ENCODE measurements at regions of chrX and their contacts with region 1.

Region 1: GRCh38 chrX:68828740-68829552 is at the start of gene EFNB1:
- DNase-seq: peak; percentile 88
- H3K4me3 Mint-ChIP-seq: peak within 1 kb of the TSS; percentile 86
- H3K27ac Mint-ChIP-seq: peak within 1 kb of the TSS; percentile 58
- H3K4me1 Mint-ChIP-seq: peaks cover 21% of the 10 kb centered on the region
- H3K27me3 Mint-ChIP-seq: no peaks in the 10 kb centered on the region
- total RNA-seq, gene EFNB1: 5.8 to 6.2 TPM

Region 2: DNA sequence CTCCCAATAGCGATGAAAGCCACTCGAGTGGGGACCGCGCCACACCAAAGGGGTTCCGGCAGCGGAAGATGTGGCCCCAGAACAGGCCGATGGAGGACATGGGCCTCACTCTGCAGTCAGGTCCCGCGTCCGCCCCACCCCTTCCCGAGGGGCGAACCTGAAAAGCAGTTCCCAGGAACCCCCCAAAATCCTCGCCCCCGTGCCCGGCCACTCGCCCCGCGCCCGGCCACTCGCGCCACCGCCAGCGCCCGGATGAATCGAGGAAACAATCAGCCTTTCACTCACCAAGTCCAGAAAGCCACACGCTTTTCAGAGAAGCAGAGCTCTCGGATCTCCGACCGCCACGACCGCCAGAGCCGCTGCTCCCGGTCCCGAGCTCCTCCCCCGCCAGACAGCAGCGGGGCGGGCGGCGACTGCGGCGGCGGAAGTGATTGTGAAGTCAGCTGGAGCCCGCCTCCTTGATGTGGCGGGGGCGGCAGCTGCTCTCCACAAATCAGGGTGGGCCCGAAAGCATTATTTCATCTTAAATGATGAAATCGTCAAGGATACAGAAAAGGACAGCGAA is 336.2 kb after region 1 on chrX and contains the start of gene PJA1:
- CTCF ChIA-PET with region 1: interaction called, 16 read pairs
- POLR2A ChIA-PET with region 1: interaction called, 5 read pairs
- DNase-seq: peak; percentile 71
- H3K4me3 Mint-ChIP-seq: peak within 1 kb of the TSS; percentile 78
- H3K27ac Mint-ChIP-seq: peak within 1 kb of the TSS; percentile 65
- H3K4me1 Mint-ChIP-seq: peaks cover 30% of the 10 kb centered on the region
- H3K27me3 Mint-ChIP-seq: peaks cover 4% of the 10 kb centered on the region
- total RNA-seq, gene PJA1: 15.4 to 19.5 TPM

Region 3: GRCh38 chrX:69222103-69223090 is 393.5 kb after region 1 on chrX:
- CTCF ChIA-PET with region 1: interaction called, 47 read pairs
- POLR2A ChIA-PET with region 1: no interaction called
- DNase-seq: peak; percentile 66
- H3K4me3 Mint-ChIP-seq: no peak overlapping the region
- H3K27ac Mint-ChIP-seq: no peak overlapping the region
- H3K4me1 Mint-ChIP-seq: no peaks in the 10 kb centered on the region
- H3K27me3 Mint-ChIP-seq: no peaks in the 10 kb centered on the region

Measured in activated CD4-positive, alpha-beta memory T cell treated with anti-CD3 and anti-CD28 coated beads, Interleukin-2, amount 10 ng/mL, durations not matched to agents 7 days and 5 days (primary cell).